HCT116 (cell line): ENCODE measurements at regions of chr12 and their contacts with region 1.

Region 1: GRCh38 chr12:30965613-30965985 is 39.1 kb downstream of the TSPAN11 start:
- DNase-seq: peak; percentile 6
- ATAC-seq: peak; percentile 76
- H3K4me3 ChIP-seq: no peak overlapping the region
- H3K27ac ChIP-seq: no peak overlapping the region
- H3K4me1 ChIP-seq: no peaks in the 10 kb centered on the region
- H3K27me3 ChIP-seq: peaks cover 28% of the 10 kb centered on the region; the same call in 1 of the 2 replicates
- CTCF ChIP-seq: peak; percentile 29 to 53 (median 49); a peak in 5 of 6 replicates
- POLR2A ChIP-seq: no peak
- RAD21 ChIP-seq: peak; percentile 42

Region 2: DNA sequence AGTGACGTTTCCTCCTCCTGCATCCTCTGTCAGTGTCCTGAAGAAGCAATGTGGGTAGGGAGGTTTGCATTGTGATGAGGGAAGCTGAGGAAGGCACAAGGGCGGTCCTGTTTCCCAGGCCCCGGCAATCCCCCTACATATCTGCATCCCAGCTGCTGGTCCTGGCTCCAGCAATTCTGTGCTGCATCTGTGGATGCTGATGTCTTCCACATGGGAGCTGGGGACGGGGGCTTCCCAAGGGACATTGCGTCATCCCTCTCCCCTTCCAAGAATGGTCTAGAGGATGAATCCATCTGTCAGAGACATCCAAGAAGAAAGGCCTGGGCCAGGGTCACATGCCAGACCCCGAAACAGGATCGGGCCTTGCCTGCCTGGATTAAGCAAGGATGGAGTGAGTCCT is 13.0 kb after region 1 on chr12:
- CTCF ChIA-PET with region 1: no interaction called
- POLR2A ChIA-PET with region 1: no interaction called
- RAD21 ChIA-PET with region 1: no interaction called
- intact Hi-C with region 1: no loop called
- DNase-seq: no peak
- ATAC-seq: no peak
- H3K4me3 ChIP-seq: no peak overlapping the region
- H3K27ac ChIP-seq: no peak overlapping the region
- H3K4me1 ChIP-seq: no peaks in the 10 kb centered on the region
- H3K27me3 ChIP-seq: no peaks in the 10 kb centered on the region; the same call in 1 of the 2 replicates
- CTCF ChIP-seq: no peak
- POLR2A ChIP-seq: no peak
- RAD21 ChIP-seq: no peak

Region 3: GRCh38 chr12:31057671-31058070 is 92.1 kb after region 1 on chr12:
- CTCF ChIA-PET with region 1: no interaction called
- POLR2A ChIA-PET with region 1: no interaction called
- RAD21 ChIA-PET with region 1: no interaction called
- intact Hi-C with region 1: loop called (anchors 10 kb)
- DNase-seq: no peak
- ATAC-seq: no peak
- H3K4me3 ChIP-seq: no peak overlapping the region
- H3K27ac ChIP-seq: no peak overlapping the region
- H3K4me1 ChIP-seq: no peaks in the 10 kb centered on the region
- H3K27me3 ChIP-seq: no peaks in the 10 kb centered on the region
- CTCF ChIP-seq: no peak
- POLR2A ChIP-seq: no peak
- RAD21 ChIP-seq: no peak

Region 4: DNA sequence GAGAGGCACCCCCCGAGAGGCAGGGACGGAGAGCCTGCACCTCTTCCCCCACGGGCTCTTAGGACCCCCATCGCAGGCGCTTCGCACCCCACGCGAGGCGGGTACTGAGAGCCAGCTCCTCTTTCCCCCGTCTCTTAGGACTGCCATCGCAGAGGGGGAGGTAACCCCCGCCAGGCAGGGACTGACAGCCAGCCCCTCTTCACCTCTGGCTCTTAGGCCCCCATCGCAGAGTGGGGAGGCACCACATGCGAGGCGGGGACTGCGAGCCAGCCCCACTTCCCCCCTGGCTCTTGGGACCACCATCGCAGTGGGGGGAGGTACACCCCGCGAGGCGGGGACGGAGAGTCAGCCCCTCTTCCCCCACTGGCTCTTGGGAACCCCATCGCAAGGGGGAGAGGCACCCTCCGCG is 154.2 kb after region 1 on chr12:
- CTCF ChIA-PET with region 1: no interaction called
- POLR2A ChIA-PET with region 1: no interaction called
- RAD21 ChIA-PET with region 1: no interaction called
- intact Hi-C with region 1: no loop called
- DNase-seq: no peak
- ATAC-seq: no peak
- H3K4me3 ChIP-seq: no peak overlapping the region
- H3K27ac ChIP-seq: no peak overlapping the region
- H3K4me1 ChIP-seq: peaks cover 12 to 22% of the 10 kb centered on the region in 2 experiments; a peak in 3 of 4 replicates
- H3K27me3 ChIP-seq: no peaks in the 10 kb centered on the region
- CTCF ChIP-seq: no peak
- POLR2A ChIP-seq: no peak
- RAD21 ChIP-seq: no peak